ENCODE measurements at regions of chr17 and their contacts with region 1.

Region 1: DNA sequence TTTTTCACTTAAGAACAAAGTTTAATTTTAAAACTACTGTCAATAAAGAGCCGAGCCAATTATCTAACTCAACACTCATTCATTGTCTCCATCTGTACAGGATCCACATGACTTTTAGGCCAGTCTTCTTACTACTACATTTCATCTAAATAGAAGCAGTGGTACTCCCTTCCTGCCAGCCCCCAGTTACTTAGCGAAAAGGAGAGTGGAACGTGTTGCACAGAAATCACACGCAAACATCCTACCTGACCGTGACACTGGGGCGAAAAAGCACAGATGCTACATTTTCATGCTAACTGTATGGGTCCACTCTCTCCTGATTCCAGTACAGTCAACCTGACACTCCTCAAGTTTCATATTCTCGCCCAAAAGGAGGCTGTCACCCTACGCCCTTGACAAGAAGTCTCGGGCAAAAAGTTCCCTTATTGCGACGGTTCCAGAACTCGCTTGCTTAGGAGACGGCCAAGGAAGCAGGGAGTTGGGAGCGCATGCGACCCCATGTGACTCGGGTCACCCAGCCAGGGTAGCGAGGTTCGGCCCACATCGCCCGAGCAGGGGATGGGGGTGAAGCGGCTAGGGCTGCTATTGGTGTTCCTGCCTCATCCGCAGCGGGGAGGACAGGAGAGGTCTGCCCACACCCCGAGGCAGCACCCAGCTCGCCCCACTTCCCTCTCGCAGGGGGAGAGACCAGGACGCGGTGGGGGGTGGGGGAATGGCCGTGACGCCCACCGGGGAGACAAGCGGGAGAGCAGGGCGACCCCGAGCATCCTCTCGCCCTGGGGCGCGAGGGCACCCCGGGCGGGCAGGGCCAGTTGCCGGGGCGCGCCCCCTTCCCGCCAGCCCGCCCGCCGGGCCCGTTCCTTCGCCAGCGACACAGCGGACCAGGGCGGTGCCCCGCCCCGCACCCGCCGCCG is 935 bp downstream of the GNA13 start:
- DNase-seq: peak; percentile 47
- H3K4me3 ChIP-seq: peak overlapping the region; percentile 64 to 84 (median 83)
- H3K27ac ChIP-seq: peak overlapping the region; percentile 84
- H3K4me1 ChIP-seq: peaks cover 32% of the 10 kb centered on the region
- H3K27me3 ChIP-seq: no peaks in the 10 kb centered on the region
- CTCF ChIP-seq: no peak

Region 2: GRCh38 chr17:64975329-64976087 is 80.1 kb before region 1 on chr17:
- CTCF ChIA-PET with region 1: no interaction called
- dilution Hi-C with region 1: no loop called
- in situ Hi-C with region 1: no loop called
- intact Hi-C with region 1: loop called (anchors 1 kb)
- DNase-seq: peak; percentile 94
- H3K4me3 ChIP-seq: peak overlapping the region; percentile 49 to 74 (median 62)
- H3K27ac ChIP-seq: peak overlapping the region; percentile 82
- H3K4me1 ChIP-seq: peaks cover 23% of the 10 kb centered on the region
- H3K27me3 ChIP-seq: no peaks in the 10 kb centered on the region
- CTCF ChIP-seq: no peak

Region 3: DNA sequence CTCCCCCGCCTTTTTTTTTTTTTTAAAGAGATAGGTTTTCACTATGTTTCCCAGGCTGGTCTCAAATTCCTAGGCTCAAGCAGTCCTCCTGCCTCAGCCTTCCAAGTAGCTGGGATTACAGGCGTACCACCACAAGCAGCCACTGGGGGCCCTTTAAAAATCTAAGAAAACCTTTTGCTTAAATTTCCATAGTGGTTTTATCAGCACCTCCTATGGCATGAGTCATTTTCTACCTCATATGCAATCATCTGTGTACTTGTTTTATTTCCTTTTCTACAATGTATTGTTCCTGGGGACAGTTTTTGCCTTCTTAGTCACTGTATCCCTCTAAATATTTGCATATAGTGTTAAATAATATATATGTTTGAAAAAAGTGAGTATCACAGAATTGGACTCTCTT is 28.3 kb before region 1 on chr17:
- CTCF ChIA-PET with region 1: interaction called, 10 read pairs
- dilution Hi-C with region 1: no loop called
- in situ Hi-C with region 1: no loop called
- intact Hi-C with region 1: loop called (anchors 2 kb)
- DNase-seq: peak; percentile 74
- H3K4me3 ChIP-seq: no peak overlapping the region
- H3K27ac ChIP-seq: peak overlapping the region; percentile 51
- H3K4me1 ChIP-seq: peaks cover 20% of the 10 kb centered on the region
- H3K27me3 ChIP-seq: no peaks in the 10 kb centered on the region
- CTCF ChIP-seq: peak; percentile 30 to 36

Region 4: DNA sequence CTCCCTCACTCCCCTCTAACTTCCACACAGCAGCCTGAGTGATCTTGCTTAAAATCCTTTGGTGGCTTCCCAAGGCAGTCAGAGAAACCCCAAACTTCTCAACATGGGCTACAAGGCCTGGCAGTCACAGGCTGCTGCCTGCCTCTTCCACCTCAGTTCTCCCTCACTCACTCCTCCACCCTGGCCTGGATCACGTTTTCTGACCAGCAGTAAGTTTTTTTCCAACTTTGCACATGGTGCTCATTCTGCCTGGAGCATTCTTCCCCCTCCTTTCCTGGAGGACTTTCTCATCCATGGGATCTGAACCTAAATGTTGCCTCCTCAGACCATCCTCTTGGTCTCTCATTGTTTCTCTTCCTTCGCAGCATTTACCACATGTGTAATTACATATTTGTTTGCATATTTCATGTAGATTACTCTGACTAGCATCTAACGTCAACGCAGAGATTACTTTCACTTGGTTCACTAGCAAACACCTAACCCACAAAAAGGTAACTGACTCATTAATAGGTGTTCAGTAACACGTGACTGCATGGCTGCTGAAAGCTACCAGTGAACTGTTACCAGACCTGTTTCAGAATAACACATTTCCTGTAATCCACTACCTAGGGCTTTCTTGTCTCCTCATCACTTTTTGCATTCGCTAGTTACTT is 16.1 kb before region 1 on chr17:
- CTCF ChIA-PET with region 1: no interaction called
- dilution Hi-C with region 1: no loop called
- in situ Hi-C with region 1: no loop called
- intact Hi-C with region 1: loop called (anchors 2 kb)
- DNase-seq: peak; percentile 86
- H3K4me3 ChIP-seq: peak overlapping the region; percentile 6 to 43 (median 15)
- H3K27ac ChIP-seq: peak overlapping the region; percentile 62
- H3K4me1 ChIP-seq: peaks cover 23% of the 10 kb centered on the region
- H3K27me3 ChIP-seq: no peaks in the 10 kb centered on the region
- CTCF ChIP-seq: no peak

Region 5: GRCh38 chr17:65088411-65089345 is 33.1 kb after region 1 on chr17:
- CTCF ChIA-PET with region 1: no interaction called
- dilution Hi-C with region 1: no loop called
- in situ Hi-C with region 1: no loop called
- intact Hi-C with region 1: loop called (anchors 1 kb)
- DNase-seq: peak; percentile 74
- H3K4me3 ChIP-seq: no peak overlapping the region
- H3K27ac ChIP-seq: peak overlapping the region; percentile 54
- H3K4me1 ChIP-seq: peaks cover 23% of the 10 kb centered on the region
- H3K27me3 ChIP-seq: no peaks in the 10 kb centered on the region
- CTCF ChIP-seq: no peak

Region 6: DNA sequence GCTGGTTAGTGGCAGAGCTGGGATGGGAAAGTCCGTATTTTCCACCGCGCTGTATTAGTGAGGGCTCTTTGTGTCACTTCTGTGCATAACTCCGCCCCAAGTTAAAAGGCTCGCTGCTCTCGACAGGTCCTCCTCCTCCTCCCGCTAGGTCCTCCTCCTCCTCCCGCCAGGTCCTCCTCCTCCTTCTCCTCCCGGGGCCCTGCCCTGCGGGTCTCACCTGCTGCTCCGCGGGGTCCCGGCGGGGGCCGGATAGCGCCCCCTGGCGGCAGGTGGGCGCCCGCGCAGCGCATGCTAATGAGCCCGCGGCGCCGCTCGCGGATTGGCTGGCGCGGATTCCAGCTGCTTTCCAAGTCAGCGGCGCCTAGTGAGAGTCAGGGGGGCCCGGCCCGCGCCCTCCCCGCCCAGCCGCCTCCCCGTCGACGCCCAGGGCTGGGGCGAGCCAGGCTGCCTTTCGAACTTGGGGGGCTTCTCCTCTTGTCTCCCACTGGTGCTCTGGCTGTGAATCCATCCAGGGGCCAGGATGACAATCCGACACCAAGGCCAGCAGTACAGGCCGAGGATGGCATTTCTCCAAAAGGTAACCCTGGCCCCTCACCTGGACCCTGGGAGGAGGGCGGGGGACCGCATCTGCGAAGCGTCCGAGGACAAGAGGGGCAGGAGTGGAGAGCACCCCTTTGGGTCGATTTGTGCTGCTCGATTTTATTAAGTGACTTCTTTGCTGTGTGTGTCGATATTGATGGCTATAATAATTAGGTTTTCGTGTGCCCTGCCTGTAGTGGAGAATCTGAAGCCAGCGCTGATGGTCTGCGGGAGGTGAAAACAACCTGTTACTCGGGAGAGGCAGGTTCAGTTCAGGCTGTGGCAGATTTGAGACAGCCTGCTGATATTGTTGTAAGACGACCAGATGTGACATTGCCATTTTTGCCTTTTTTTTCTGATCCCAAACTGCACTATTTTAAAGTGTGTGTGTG is 81.7 kb after region 1 on chr17 and contains the start of gene RGS9:
- CTCF ChIA-PET with region 1: no interaction called
- dilution Hi-C with region 1: no loop called
- in situ Hi-C with region 1: no loop called
- intact Hi-C with region 1: loop called (anchors 2 kb)
- DNase-seq: peak; percentile 65
- H3K4me3 ChIP-seq: peak within 1 kb of the TSS; percentile 38 to 49 (median 40)
- H3K27ac ChIP-seq: no peak within 1 kb of the TSS
- H3K4me1 ChIP-seq: peaks cover 4% of the 10 kb centered on the region
- H3K27me3 ChIP-seq: no peaks in the 10 kb centered on the region
- CTCF ChIP-seq: peak; percentile 58 to 93
- total RNA-seq, gene RGS9: 2.8 to 3.5 TPM

Measured in mammary epithelial cell (primary cell).